ENCODE measurements at regions of chr9 and their contacts with region 1.

Region 1: GRCh38 chr9:71647094-71647591 is 121.2 kb downstream of the CEMIP2 start:
- DNase-seq: peak; percentile 21
- H3K4me3 Mint-ChIP-seq: peak overlapping the region; percentile 73
- H3K27ac Mint-ChIP-seq: no peak overlapping the region
- H3K4me1 Mint-ChIP-seq: peaks cover 66% of the 10 kb centered on the region
- H3K27me3 Mint-ChIP-seq: peaks cover 4% of the 10 kb centered on the region

Region 2: GRCh38 chr9:71608825-71609452 is 38.2 kb before region 1 on chr9:
- intact Hi-C with region 1: no loop called
- DNase-seq: no peak
- H3K4me3 Mint-ChIP-seq: no peak overlapping the region
- H3K27ac Mint-ChIP-seq: no peak overlapping the region
- H3K4me1 Mint-ChIP-seq: no peaks in the 10 kb centered on the region
- H3K27me3 Mint-ChIP-seq: peaks cover 21% of the 10 kb centered on the region

Region 3: GRCh38 chr9:71628247-71628646 is 18.9 kb before region 1 on chr9:
- intact Hi-C with region 1: loop called (anchors 2 kb)
- DNase-seq: no peak
- H3K4me3 Mint-ChIP-seq: no peak overlapping the region
- H3K27ac Mint-ChIP-seq: no peak overlapping the region
- H3K4me1 Mint-ChIP-seq: peaks cover 45% of the 10 kb centered on the region
- H3K27me3 Mint-ChIP-seq: peaks cover 19% of the 10 kb centered on the region

Region 4: DNA sequence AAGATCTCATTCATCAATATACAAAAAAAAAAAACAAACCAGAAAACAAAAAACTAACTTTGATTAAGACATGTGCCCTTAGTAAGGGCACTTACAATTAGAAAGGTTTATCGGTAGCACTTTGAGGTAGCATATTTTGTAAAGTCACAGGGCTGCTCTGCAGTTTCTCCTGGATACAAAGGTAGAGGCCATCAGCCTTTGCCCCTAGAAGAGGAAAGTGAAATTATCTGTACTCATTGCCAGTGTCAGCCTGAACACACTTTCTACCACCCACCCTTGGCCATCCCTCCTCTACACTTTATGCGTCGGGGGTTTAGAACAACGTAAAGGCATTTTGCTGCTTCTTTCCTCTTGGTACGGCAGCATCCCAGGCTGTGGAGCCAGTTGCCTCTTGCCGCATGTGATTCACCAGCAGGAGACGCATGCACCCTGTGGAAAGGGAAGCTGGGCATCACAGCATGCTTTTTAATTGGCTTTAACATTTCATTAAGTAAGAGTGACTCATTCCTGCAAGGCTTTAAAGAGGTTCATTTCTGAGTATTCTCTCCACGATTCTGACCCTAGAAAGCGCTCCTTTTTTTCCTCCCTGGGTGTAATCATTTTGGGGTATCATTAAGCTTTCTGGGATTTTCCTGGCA is 36.6 kb after region 1 on chr9:
- intact Hi-C with region 1: loop called (anchors 2 kb)
- DNase-seq: no peak
- H3K4me3 Mint-ChIP-seq: peak overlapping the region; percentile 72
- H3K27ac Mint-ChIP-seq: peak overlapping the region; percentile 68
- H3K4me1 Mint-ChIP-seq: peaks cover 60% of the 10 kb centered on the region
- H3K27me3 Mint-ChIP-seq: no peaks in the 10 kb centered on the region

Measured in activated T-helper 1 cell treated with anti-CD3 and anti-CD28 coated beads, Interleukin-12 subunit alpha, Interleukin-12 subunit beta, Interleukin-2, Interleukin-4 antibody, amounts not matched to agents 30 ng/mL and 10 ng/mL and 1 ng/mL, durations not matched to agents 14 hours and 24 hours and 36 hours (primary cell).